ENCODE measurements at regions of chr11 and their contacts with region 1.

Region 1: DNA sequence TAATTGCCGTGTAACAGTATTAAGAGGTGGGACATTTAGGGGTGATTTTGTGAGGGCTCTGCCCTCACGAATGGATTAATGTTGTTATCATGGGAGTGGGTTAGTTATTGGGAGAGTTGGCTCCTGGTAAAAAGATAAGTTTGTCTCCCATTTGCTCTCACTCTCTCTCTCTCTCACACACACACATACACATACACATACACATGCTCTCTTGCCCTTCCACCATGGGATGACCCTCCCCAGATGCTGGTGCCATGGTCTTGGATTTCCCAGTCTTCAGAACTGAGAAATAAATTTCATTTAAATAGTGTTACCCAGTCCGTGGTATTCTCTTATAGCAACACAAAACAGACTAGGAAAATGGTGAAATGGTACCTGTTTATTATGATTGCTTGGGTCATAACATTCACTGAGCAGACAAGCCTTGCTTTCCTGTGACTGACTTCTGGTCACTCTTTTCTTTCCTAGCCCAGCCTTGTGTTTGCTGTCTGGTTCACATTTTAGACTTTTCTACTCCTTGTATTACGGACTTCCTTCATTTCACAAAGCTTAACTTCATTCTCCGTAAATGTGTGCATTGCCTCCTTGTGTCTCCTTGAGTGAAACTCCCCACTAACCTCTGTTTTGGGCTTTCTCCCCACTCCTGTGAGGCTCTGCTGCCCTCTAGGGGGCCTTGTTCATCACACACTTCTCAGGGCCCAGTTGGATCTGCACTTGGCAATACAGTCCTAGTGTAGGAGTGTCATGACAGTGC is 206.5 kb upstream of the CTSC start:
- DNase-seq: peak; percentile 79
- H3K4me3 ChIP-seq: no peak overlapping the region
- H3K27ac ChIP-seq: no peak overlapping the region
- H3K4me1 ChIP-seq: no peaks in the 10 kb centered on the region
- CTCF ChIP-seq: peak; percentile 93

Region 2: DNA sequence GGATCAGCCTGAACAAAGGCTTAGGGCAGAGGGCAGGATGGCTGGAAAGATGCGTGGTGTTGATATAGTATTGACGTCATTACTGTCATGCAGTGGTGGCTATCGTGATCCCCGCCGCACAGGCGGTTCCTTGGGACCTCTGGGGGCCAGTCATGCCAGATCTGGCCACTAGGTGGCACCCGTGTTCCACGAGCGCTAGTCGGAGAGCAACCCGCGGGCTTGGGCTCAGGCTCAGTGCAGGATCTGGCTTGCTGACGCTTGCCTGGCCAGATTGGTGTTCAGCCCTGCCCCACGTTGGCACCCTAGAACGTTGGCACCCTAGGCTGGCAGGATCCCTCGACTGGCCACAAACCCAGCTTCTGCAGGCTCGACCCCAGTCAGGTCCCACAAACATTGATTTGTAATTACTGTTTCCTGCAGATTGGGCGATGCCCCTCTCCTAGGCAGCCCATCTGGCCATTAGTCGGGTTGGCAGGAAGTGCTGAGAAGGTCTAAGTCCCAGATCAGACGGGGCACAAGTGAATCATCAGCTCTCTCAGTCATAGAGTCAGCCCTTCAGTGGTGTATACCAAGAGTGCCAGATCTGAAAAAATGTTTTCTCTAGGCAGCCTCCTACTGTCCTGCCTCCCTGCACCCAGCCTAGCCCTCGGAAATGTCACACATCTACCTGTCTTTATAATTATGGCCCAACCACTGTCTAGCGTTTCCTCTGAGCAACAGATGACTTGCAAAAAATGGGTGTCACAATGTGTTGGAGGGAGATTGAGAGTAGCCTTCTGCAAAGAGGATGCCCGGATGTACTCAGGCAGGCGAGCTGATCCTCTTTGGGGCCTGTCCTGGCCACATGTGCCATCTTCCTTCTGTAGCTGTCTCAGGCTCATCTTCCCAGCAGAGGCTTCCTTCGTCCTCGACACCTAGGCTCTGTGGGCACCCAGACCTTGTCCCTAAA is 1191.0 kb before region 1 on chr11:
- CTCF ChIA-PET with region 1: no interaction called
- POLR2A ChIA-PET with region 1: no interaction called
- intact Hi-C with region 1: loop called (anchors 1 kb)
- DNase-seq: peak; percentile 91
- H3K4me3 ChIP-seq: no peak overlapping the region
- H3K27ac ChIP-seq: peak overlapping the region; percentile 92
- H3K4me1 ChIP-seq: peaks cover 79% of the 10 kb centered on the region
- CTCF ChIP-seq: peak; percentile 96

Region 3: GRCh38 chr11:87722756-87723565 is 821.1 kb before region 1 on chr11:
- CTCF ChIA-PET with region 1: no interaction called
- POLR2A ChIA-PET with region 1: no interaction called
- intact Hi-C with region 1: loop called (anchors 10 kb)
- DNase-seq: peak; percentile 47
- H3K4me3 ChIP-seq: no peak overlapping the region
- H3K27ac ChIP-seq: no peak overlapping the region
- H3K4me1 ChIP-seq: no peaks in the 10 kb centered on the region
- CTCF ChIP-seq: peak; percentile 87

Region 4: DNA sequence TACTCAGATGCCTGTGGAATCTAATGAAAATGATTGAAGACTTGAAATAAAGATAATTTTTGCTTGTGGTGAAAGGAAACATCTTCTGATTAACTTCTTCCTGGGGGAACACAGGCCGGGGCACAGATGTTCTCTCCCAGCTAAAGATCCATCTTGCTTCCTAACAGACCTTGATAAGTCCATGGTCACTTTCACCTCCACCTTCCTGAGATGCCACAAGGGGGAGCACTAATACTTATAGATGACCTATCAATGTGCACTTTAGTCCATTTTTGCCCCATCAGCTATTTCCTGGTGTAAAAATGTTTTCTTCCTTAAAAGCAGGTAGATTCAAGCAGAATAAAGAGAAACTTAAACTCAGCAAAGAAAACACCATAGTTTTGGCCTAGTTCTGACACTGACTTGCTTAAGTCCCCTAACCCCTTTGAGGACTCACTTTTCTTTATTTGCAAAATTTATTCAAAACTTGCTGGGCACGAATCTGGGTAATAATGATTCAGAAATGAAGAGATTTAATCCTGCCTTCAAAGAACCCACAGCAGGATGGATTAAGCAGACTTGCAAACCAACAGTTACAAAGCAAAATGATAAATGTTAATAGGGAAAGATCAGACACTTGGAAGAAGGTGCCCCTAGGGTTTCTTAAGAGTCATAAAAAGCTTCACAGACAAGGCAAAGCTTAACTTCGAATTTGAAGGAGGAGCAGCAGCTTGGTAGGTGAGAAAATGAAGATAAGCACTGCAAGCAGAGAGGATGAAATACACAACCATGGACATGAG is 527.5 kb before region 1 on chr11:
- CTCF ChIA-PET with region 1: interaction called, 3 read pairs
- POLR2A ChIA-PET with region 1: no interaction called
- intact Hi-C with region 1: loop called (anchors 1 kb)
- DNase-seq: peak; percentile 77
- H3K4me3 ChIP-seq: no peak overlapping the region
- H3K27ac ChIP-seq: no peak overlapping the region
- H3K4me1 ChIP-seq: no peaks in the 10 kb centered on the region
- CTCF ChIP-seq: peak; percentile 89

Region 5: GRCh38 chr11:88231894-88232482 is 312.1 kb before region 1 on chr11:
- CTCF ChIA-PET with region 1: interaction called, 3 read pairs
- POLR2A ChIA-PET with region 1: no interaction called
- intact Hi-C with region 1: loop called (anchors 1 kb)
- DNase-seq: peak; percentile 28
- H3K4me3 ChIP-seq: no peak overlapping the region
- H3K27ac ChIP-seq: no peak overlapping the region
- H3K4me1 ChIP-seq: no peaks in the 10 kb centered on the region
- CTCF ChIP-seq: peak; percentile 81

Region 6: GRCh38 chr11:88292171-88292843 is 251.8 kb before region 1 on chr11:
- CTCF ChIA-PET with region 1: no interaction called
- POLR2A ChIA-PET with region 1: no interaction called
- intact Hi-C with region 1: no loop called
- DNase-seq: no peak
- H3K4me3 ChIP-seq: no peak overlapping the region
- H3K27ac ChIP-seq: no peak overlapping the region
- H3K4me1 ChIP-seq: no peaks in the 10 kb centered on the region
- CTCF ChIP-seq: no peak